ENCODE measurements at regions of chr12 and their contacts with region 1.

Region 1: DNA sequence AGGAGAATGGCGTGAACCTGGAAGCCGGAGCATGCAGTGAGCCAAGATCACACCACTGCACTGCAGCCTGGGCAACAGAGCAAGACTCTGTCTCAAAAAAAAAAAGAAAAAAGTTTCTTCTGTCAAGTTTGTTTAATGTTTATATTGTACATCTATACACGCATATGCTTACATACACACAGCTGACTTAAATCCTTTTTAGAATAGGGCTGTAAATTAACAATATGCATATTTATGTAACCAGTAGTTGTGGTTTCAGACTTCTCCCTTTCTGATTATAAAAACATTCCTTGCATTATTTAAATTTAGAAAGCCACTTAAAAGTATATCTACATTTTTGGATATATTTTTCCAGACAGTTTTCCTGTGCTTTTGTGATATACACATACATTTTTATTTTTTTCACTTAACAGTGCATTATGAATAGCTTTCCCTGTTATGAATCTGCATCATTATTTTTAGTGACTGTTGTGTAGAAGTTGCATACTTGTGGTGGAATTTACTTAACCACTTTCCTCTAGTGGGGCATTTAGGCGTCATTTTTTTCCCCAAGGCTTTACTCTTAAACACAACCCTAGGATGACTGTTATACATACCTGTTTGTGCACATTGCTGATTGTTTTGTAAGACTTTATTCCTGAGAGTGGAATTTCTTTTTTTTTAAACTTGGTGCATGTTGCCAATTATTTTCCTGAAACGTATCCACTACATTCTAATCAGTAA is 29.4 kb downstream of the POLR3B start:
- DNase-seq: no peak
- ATAC-seq: no peak
- H3K4me3 ChIP-seq: no peak overlapping the region
- H3K27ac ChIP-seq: no peak overlapping the region
- H3K4me1 ChIP-seq: no peaks in the 10 kb centered on the region
- H3K27me3 ChIP-seq: no peaks in the 10 kb centered on the region
- CTCF ChIP-seq: no peak

Region 2: GRCh38 chr12:106345739-106346138 is 41.2 kb before region 1 on chr12:
- intact Hi-C with region 1: no loop called
- DNase-seq: peak in 1 of 4 donors; percentile 56
- ATAC-seq: peak; percentile 69
- H3K4me3 ChIP-seq: no peak overlapping the region
- H3K27ac ChIP-seq: peak overlapping the region in 1 of 2 donors; percentile 25
- H3K4me1 ChIP-seq: peaks cover 7 to 19% of the 10 kb centered on the region in 2 donors
- H3K27me3 ChIP-seq: no peaks in the 10 kb centered on the region
- CTCF ChIP-seq: peak; percentile 22 to 35

Region 3: GRCh38 chr12:106841510-106842302 is 454.7 kb after region 1 on chr12:
- intact Hi-C with region 1: loop called in 1 of 2 experiments (anchors 10 kb)
- DNase-seq: peak in 2 of 4 donors; percentile 68 to 72
- ATAC-seq: peak; percentile 84
- H3K4me3 ChIP-seq: no peak overlapping the region
- H3K27ac ChIP-seq: peak overlapping the region in 1 of 2 donors; percentile 19
- H3K4me1 ChIP-seq: peaks cover 16 to 17% of the 10 kb centered on the region in 2 donors
- H3K27me3 ChIP-seq: no peaks in the 10 kb centered on the region
- CTCF ChIP-seq: peak; percentile 39 to 51

Region 4: DNA sequence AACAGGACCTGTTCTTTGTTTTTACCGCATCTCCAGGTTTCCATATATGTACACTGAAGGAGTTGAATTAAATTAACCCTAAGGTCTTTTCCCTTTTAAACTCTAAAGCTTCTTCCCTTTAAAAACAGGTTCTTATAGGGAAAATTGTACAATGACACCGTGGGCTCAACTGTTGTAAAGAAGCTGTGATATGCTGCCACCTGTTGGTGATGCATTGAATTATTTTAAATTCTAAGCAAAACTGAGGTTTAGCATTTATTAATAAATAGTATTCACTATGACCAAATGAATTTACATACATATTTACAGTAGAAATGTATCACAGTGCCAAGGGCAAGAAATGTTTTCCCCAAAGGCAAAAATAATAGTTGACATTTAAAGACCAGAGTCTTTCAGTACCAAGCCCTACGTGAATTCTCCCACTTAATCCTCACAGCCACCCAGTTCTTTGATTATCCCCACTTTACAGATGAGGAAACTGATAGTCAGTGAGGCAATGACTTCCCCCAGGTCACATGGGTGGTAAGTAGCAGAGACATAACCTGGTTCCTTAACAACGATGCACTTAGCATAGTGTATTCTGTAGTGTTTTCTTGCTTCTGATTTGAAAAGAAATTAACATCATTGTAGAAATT is 533.1 kb after region 1 on chr12:
- intact Hi-C with region 1: loop called in 1 of 2 experiments (anchors 5 kb)
- DNase-seq: peak in 2 of 4 donors; percentile 33 to 60
- ATAC-seq: peak; percentile 79
- H3K4me3 ChIP-seq: no peak overlapping the region
- H3K27ac ChIP-seq: no peak overlapping the region
- H3K4me1 ChIP-seq: no peaks in the 10 kb centered on the region
- H3K27me3 ChIP-seq: peaks cover 7 to 98% of the 10 kb centered on the region in 2 donors
- CTCF ChIP-seq: peak; percentile 51 to 68